BJ (cell line): ENCODE measurements at regions of chr14 and their contacts with region 1.

Region 1: DNA sequence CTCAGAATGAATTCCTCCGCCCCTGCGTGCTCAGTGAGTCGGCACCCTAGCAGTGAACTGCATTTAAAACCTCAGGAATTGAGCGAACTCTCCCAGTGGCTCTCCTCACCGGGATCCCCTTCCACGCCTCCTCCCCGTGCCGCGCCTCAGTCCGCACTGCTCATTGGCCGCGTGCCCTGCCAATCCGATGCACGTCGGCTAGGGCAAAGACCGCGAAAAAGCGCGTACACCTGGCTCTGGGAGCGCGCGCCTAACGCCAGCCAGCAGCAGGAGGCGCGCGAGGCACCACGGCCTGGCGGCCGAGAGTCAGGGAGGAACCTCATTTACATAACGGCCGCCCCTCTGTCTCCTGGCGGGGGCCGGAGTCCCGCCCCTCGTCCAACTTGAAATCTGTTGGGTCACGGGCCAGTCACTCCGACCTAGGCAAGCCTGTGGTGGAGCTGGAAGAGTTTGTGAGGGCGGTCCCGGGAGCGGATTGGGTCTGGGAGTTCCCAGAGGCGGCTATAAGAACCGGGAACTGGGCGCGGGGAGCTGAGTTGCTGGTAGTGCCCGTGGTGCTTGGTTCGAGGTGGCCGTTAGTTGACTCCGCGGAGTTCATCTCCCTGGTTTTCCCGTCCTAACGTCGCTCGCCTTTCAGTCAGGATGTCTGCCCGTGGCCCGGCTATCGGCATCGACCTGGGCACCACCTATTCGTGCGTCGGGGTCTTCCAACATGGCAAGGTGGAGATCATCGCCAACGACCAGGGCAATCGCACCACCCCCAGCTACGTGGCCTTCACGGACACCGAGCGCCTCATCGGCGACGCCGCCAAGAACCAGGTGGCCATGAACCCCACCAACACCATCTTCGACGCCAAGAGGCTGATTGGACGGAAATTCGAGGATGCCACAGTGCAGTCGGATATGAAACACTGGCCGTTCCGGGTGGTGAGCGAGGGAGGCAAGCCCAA is at the start of gene HSPA2:
- DNase-seq: peak; percentile 96
- H3K4me3 ChIP-seq: peak within 1 kb of the TSS; percentile 55
- H3K27me3 ChIP-seq: no peaks in the 10 kb centered on the region
- CTCF ChIP-seq: peak; percentile 92
- polyA plus RNA-seq, gene HSPA2: 64.1 and 96.1 TPM in 2 replicates

Region 2: GRCh38 chr14:64645220-64645892 is 104.9 kb after region 1 on chr14:
- CTCF ChIA-PET with region 1: interaction called, 13 read pairs
- POLR2A ChIA-PET with region 1: interaction called, 4 read pairs
- DNase-seq: peak; percentile 100
- H3K4me3 ChIP-seq: no peak overlapping the region
- H3K27me3 ChIP-seq: no peaks in the 10 kb centered on the region
- CTCF ChIP-seq: no peak